CD8-positive, alpha-beta T cell (primary cell): ENCODE measurements at regions of chr7 and their contacts with region 1.

Region 1: GRCh38 chr7:158976849-158977593 is 120.7 kb downstream of the DYNC2I1 start:
- DNase-seq: peak; percentile 85 to 96 (median 91)
- ATAC-seq: peak; percentile 87
- H3K4me3 ChIP-seq: peak overlapping the region; percentile 42 to 57
- H3K4me3 Mint-ChIP-seq: peak overlapping the region; percentile 84
- H3K27ac ChIP-seq: peak overlapping the region; percentile 36 to 71
- H3K27ac Mint-ChIP-seq: peak overlapping the region; percentile 83
- H3K4me1 ChIP-seq: peaks cover 11% of the 10 kb centered on the region
- H3K4me1 Mint-ChIP-seq: peaks cover 20% of the 10 kb centered on the region
- H3K27me3 ChIP-seq: no peaks in the 10 kb centered on the region
- H3K27me3 Mint-ChIP-seq: no peaks in the 10 kb centered on the region
- CTCF ChIP-seq: peak; percentile 94

Region 2: DNA sequence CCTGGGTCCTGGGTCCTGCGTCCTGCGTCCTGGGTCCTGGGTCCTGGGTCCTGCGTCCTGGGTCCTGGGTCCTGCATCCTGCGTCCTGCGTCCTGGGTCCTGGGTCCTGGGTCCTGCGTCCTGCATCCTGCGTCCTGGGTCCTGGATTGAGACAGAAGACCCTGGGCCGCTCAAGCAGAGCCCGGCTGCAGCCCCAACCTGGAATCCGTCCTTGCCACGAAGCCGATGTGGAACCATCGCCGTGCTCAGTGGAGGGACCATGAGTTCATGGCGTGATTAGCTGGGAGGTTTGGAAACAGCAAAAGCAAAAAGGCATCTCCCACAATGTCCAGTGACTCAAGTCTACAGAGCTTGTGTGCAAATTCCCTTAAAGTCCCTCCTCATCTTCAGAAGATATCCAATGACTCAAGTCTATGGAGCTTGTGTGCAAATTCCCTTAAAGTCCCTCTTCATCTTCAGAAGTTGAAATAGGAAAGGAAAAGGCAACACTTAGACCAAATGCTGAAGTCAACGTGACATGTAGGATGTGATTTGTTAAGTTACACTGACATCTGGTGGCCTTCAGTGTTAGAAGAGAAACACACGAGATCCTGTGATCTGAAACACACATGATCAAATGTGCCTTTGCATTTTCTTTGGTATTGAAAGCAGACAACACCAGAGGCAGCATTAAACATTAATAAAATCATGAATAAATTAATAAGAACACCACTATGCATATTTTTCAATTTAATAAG is 569.3 kb before region 1 on chr7:
- CTCF ChIA-PET with region 1: no interaction called
- POLR2A ChIA-PET with region 1: no interaction called
- intact Hi-C with region 1: no loop called
- DNase-seq: peak in 1 of 9 experiments; percentile 35
- ATAC-seq: no peak
- H3K4me3 ChIP-seq: no peak overlapping the region
- H3K4me3 Mint-ChIP-seq: no peak overlapping the region
- H3K27ac ChIP-seq: no peak overlapping the region
- H3K27ac Mint-ChIP-seq: no peak overlapping the region
- H3K4me1 ChIP-seq: no peaks in the 10 kb centered on the region
- H3K4me1 Mint-ChIP-seq: no peaks in the 10 kb centered on the region
- H3K27me3 ChIP-seq: peaks cover 0 to 2% of the 10 kb centered on the region in 2 experiments
- H3K27me3 Mint-ChIP-seq: peaks cover 5% of the 10 kb centered on the region
- CTCF ChIP-seq: no peak

Region 3: DNA sequence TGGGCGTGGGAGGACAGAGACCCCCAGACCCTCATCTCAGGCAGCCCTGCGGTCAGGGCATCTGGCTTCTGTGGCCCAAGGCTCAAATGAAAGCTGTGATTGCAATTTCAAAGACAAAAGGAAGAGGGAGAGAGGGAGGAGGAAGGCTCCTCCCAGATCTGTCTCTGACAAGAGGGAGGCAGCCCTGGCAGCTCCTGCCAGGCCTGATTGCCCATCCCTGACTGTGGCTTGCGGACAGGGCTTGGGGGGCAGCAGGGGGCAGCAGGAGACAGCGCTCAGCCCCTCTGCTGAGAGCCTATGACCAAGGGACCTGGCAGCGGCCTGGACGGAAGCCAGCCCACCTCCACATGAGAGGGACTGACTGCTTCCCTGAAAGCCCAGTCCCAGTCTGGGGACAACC is 481.2 kb before region 1 on chr7:
- CTCF ChIA-PET with region 1: interaction called, 3 read pairs
- POLR2A ChIA-PET with region 1: no interaction called
- intact Hi-C with region 1: loop called in 1 of 2 experiments (anchors 2 kb)
- DNase-seq: peak in 2 of 9 experiments; percentile 10 to 11
- ATAC-seq: no peak
- H3K4me3 ChIP-seq: no peak overlapping the region
- H3K4me3 Mint-ChIP-seq: no peak overlapping the region
- H3K27ac ChIP-seq: no peak overlapping the region
- H3K27ac Mint-ChIP-seq: no peak overlapping the region
- H3K4me1 ChIP-seq: no peaks in the 10 kb centered on the region
- H3K4me1 Mint-ChIP-seq: peaks cover 4% of the 10 kb centered on the region
- H3K27me3 ChIP-seq: no peaks in the 10 kb centered on the region
- H3K27me3 Mint-ChIP-seq: no peaks in the 10 kb centered on the region
- CTCF ChIP-seq: no peak

Region 4: DNA sequence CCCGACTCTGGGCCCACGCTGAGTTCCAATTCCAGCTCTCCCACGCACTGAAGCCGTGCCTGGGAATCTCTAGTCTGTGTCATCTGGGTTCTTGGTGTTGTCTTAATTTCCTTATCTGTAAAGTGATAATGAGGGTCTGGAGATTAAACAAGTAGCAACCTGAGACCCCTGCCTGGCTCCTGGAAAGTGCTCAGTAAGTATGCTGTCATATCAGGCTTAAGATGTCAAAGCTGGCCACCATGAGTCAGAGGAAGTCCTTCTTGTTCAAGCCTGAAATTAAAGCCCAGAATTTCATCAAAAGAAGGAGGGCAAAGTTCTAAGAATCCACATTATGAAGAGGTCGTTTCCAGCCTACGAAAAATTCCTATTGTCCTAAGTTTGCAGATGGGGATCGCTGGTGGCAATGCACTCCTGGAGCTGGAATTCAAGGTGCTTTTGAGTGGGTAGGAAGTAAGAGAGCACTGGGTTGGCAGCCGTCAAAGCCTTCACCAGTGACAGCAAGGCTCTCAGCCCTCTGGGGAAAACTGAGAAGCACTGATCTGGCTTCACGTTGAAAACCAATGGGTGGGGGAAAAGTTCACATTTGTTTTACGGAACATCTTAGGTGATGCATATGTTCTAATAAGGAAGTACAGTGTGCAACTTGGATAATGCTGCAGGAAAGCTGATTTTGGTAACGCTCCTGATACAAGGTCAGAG is 222.1 kb before region 1 on chr7:
- CTCF ChIA-PET with region 1: interaction called, 7 read pairs
- POLR2A ChIA-PET with region 1: no interaction called
- intact Hi-C with region 1: loop called in 1 of 2 experiments (anchors 5 kb)
- DNase-seq: no peak
- ATAC-seq: no peak
- H3K4me3 ChIP-seq: no peak overlapping the region
- H3K4me3 Mint-ChIP-seq: no peak overlapping the region
- H3K27ac ChIP-seq: no peak overlapping the region
- H3K27ac Mint-ChIP-seq: peak overlapping the region; percentile 27
- H3K4me1 ChIP-seq: no peaks in the 10 kb centered on the region
- H3K4me1 Mint-ChIP-seq: no peaks in the 10 kb centered on the region
- H3K27me3 ChIP-seq: no peaks in the 10 kb centered on the region
- H3K27me3 Mint-ChIP-seq: no peaks in the 10 kb centered on the region
- CTCF ChIP-seq: no peak

Region 5: GRCh38 chr7:158782761-158783401 is 194.1 kb before region 1 on chr7:
- CTCF ChIA-PET with region 1: interaction called, 5 read pairs
- POLR2A ChIA-PET with region 1: no interaction called
- intact Hi-C with region 1: loop called (anchors 5 kb)
- DNase-seq: peak in 3 of 9 experiments; percentile 28 to 57 (median 40)
- ATAC-seq: peak; percentile 36
- H3K4me3 ChIP-seq: no peak overlapping the region
- H3K4me3 Mint-ChIP-seq: no peak overlapping the region
- H3K27ac ChIP-seq: peak overlapping the region in 1 of 2 experiments; percentile 26
- H3K27ac Mint-ChIP-seq: no peak overlapping the region
- H3K4me1 ChIP-seq: peaks cover 31% of the 10 kb centered on the region
- H3K4me1 Mint-ChIP-seq: no peaks in the 10 kb centered on the region
- H3K27me3 ChIP-seq: no peaks in the 10 kb centered on the region
- H3K27me3 Mint-ChIP-seq: no peaks in the 10 kb centered on the region
- CTCF ChIP-seq: no peak

Region 6: GRCh38 chr7:158856883-158857668 is 119.9 kb before region 1 on chr7:
- CTCF ChIA-PET with region 1: no interaction called
- POLR2A ChIA-PET with region 1: no interaction called
- intact Hi-C with region 1: loop called in 1 of 2 experiments (anchors 10 kb)
- DNase-seq: no peak
- ATAC-seq: no peak
- H3K4me3 ChIP-seq: peak overlapping the region; percentile 61 to 64
- H3K4me3 Mint-ChIP-seq: peak overlapping the region; percentile 96
- H3K27ac ChIP-seq: peak overlapping the region; percentile 17 to 68
- H3K27ac Mint-ChIP-seq: peak overlapping the region; percentile 80
- H3K4me1 ChIP-seq: peaks cover 10% of the 10 kb centered on the region
- H3K4me1 Mint-ChIP-seq: peaks cover 31% of the 10 kb centered on the region
- H3K27me3 ChIP-seq: no peaks in the 10 kb centered on the region
- H3K27me3 Mint-ChIP-seq: no peaks in the 10 kb centered on the region
- CTCF ChIP-seq: no peak

Region 7: GRCh38 chr7:158885624-158886023 is 91.4 kb before region 1 on chr7:
- CTCF ChIA-PET with region 1: interaction called, 9 read pairs
- POLR2A ChIA-PET with region 1: no interaction called
- intact Hi-C with region 1: loop called in 1 of 2 experiments (anchors 1 kb)
- DNase-seq: peak in 1 of 9 experiments; percentile 26
- ATAC-seq: no peak
- H3K4me3 ChIP-seq: no peak overlapping the region
- H3K4me3 Mint-ChIP-seq: no peak overlapping the region
- H3K27ac ChIP-seq: no peak overlapping the region
- H3K27ac Mint-ChIP-seq: no peak overlapping the region
- H3K4me1 ChIP-seq: no peaks in the 10 kb centered on the region
- H3K4me1 Mint-ChIP-seq: no peaks in the 10 kb centered on the region
- H3K27me3 ChIP-seq: no peaks in the 10 kb centered on the region
- H3K27me3 Mint-ChIP-seq: no peaks in the 10 kb centered on the region
- CTCF ChIP-seq: no peak